Right ventricle myocardium inferior (tissue), 1 donor: ENCODE measurements at regions of chr10 and their contacts with region 1.

Region 1: GRCh38 chr10:5977471-5978229 is at the start of gene IL15RA:
- DNase-seq: peak; percentile 87
- ATAC-seq: peak; percentile 65
- total RNA-seq, gene IL15RA: 11.6 TPM

Region 2: GRCh38 chr10:5948999-5949759 is 28.5 kb before region 1 on chr10:
- intact Hi-C with region 1: loop called (anchors 2 kb)
- DNase-seq: no peak
- ATAC-seq: peak; percentile 32

Region 3: GRCh38 chr10:6009150-6009549 is 31.5 kb after region 1 on chr10:
- intact Hi-C with region 1: no loop called
- DNase-seq: no peak
- ATAC-seq: peak; percentile 81

Region 4: DNA sequence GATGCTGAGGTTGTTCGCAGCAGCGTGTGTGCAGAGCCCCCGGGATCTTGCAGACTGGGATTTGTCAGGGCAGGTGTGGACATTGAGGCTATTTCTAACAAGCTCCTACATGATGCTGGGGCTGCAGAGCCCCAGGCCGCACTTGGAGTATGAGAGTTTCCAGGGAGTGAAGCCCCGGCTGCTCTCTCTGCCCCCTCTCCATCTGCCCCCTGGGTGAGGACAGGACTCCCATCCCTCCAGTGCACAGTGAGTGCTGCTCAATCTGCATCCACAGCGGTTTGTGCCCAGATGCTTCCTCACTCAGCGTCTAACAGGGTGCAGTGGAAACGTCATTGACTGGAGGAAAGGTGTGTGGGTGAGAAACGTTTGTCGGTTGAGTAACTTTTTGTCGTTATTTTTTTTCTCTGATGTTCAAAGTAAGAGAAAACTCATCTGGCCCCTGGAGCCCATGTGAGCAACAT is 59.2 kb after region 1 on chr10:
- intact Hi-C with region 1: no loop called
- DNase-seq: no peak
- ATAC-seq: no peak